ENCODE measurements at regions of chr6 and their contacts with region 1.

Region 1: DNA sequence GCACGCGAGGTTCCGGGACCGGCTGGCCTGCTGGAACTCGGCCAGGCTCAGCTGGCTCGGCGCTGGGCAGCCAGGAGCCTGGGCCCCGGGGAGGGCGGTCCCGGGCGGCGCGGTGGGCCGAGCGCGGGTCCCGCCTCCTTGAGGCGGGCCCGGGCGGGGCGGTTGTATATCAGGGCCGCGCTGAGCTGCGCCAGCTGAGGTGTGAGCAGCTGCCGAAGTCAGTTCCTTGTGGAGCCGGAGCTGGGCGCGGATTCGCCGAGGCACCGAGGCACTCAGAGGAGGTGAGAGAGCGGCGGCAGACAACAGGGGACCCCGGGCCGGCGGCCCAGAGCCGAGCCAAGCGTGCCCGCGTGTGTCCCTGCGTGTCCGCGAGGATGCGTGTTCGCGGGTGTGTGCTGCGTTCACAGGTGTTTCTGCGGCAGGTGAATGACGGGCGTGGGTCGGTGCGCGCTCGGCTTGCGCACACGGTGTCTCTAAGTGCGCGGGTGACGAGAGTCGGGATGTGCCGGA is at the start of gene CDKN1A:
- DNase-seq: peak; percentile 95
- H3K4me3 ChIP-seq: peak within 1 kb of the TSS; percentile 67 to 68
- H3K27ac ChIP-seq: peak within 1 kb of the TSS; percentile 89 to 92
- H3K4me1 ChIP-seq: no peaks in the 10 kb centered on the region
- H3K27me3 ChIP-seq: no peaks in the 10 kb centered on the region
- CTCF ChIP-seq: peak in 3 of 4 experiments; percentile 18 to 66 (median 48)
- POLR2A ChIP-seq: peak; percentile 100
- total RNA-seq, gene CDKN1A: 69.7 to 148 TPM

Region 2: DNA sequence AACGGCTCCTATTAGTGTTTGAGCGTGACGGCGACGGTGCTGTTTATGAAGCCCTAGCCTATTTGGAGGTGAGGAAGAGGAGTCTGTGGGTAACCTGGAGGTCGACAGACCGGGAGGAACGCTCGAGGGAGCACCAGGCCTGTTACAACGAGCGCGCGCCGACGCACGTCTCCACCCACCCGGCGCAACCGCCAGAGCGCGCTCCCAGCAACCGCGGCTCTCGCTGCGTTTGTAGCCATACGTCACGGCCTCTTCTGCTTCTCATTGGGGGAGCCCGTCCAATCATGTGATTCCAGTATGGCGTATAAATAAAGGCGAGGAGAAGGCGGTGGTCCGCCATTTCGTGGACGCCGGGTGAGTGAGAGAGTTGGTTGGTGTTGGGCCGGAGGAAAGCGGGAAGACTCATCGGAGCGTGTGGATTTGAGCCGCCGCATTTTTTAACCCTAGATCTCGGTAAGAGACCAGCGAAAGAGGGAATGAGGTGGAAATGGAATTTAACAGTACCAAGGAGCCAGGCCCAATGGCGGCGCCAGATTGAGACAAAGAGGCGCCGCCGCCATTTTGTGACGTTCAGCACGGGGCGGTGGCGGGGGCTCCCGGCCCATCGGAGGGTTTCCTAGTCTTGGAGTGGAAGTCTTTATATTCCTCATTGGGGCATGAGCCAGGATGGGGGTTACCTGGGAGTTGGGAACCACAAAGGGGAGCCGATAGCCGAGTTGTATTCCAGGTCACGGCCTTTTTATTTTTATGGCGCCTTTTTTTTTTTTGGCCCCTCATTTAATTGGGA is 84.4 kb before region 1 on chr6 and contains the start of gene SRSF3:
- intact Hi-C with region 1: loop called (anchors 1 kb)
- DNase-seq: peak; percentile 98
- H3K4me3 ChIP-seq: peak within 1 kb of the TSS; percentile 65 to 74
- H3K27ac ChIP-seq: peak within 1 kb of the TSS; percentile 98 to 99
- H3K4me1 ChIP-seq: no peaks in the 10 kb centered on the region
- H3K27me3 ChIP-seq: no peaks in the 10 kb centered on the region
- CTCF ChIP-seq: peak; percentile 46 to 89 (median 64)
- POLR2A ChIP-seq: peak; percentile 97
- total RNA-seq, gene SRSF3: 111 to 153 TPM

Region 3: GRCh38 chr6:36623547-36624459 is 54.8 kb before region 1 on chr6:
- intact Hi-C with region 1: loop called (anchors 1 kb)
- DNase-seq: peak; percentile 89
- H3K4me3 ChIP-seq: no peak overlapping the region
- H3K27ac ChIP-seq: no peak overlapping the region
- H3K4me1 ChIP-seq: no peaks in the 10 kb centered on the region
- H3K27me3 ChIP-seq: no peaks in the 10 kb centered on the region
- CTCF ChIP-seq: peak; percentile 82 to 94 (median 88)
- POLR2A ChIP-seq: no peak

Region 4: GRCh38 chr6:36759148-36759759 is 80.7 kb after region 1 on chr6:
- intact Hi-C with region 1: loop called (anchors 5 kb)
- DNase-seq: peak; percentile 80
- H3K4me3 ChIP-seq: no peak overlapping the region
- H3K27ac ChIP-seq: no peak overlapping the region
- H3K4me1 ChIP-seq: no peaks in the 10 kb centered on the region
- H3K27me3 ChIP-seq: no peaks in the 10 kb centered on the region
- CTCF ChIP-seq: peak; percentile 92 to 97 (median 94)
- POLR2A ChIP-seq: no peak

Region 5: DNA sequence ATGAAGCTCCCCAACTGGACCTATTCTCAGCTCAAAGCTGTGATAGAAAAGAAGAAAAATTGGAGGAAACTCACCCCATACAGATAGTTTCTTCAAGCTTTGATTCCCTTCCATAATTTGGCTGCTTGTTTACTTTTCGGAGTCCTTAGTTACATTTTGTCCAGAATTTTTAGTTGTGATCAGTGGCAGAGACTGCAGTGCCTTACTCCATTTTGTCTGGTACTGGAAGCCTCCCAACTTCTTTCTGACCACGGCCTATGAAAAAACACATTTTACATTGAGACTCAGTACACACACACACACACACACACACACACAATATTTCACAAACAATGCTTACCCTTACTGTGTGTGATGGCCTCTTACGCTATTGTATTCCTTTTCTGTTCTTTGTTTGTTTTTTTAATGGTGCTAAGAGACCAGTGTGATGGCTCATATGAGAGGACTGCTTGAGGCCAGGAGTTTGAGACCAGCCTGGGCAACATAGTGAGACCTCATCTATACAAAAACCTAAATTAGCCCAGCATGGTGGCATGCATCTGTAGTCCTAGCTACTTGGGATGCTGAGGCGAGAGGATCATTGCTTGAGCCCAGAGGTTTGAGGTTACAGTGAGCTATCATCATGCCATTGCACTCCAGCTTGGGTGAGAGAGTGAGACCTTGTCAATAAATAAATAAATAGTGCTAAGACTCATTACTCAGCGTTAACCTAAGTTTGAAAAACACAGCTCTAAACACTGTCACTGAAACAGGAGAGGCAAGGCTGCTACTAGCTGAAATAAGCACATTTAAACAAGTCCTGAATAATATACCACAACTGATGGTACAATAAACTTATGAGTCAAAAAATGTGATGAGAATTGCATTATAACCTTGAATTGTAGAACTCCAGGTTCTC is 661.4 kb after region 1 on chr6:
- intact Hi-C with region 1: no loop called
- DNase-seq: no peak
- H3K4me3 ChIP-seq: no peak overlapping the region
- H3K27ac ChIP-seq: peak overlapping the region in 1 of 2 donors; percentile 18
- H3K4me1 ChIP-seq: no peaks in the 10 kb centered on the region
- H3K27me3 ChIP-seq: no peaks in the 10 kb centered on the region
- CTCF ChIP-seq: no peak
- POLR2A ChIP-seq: no peak